HEK293 (cell line): ENCODE measurements at regions of chr3 and their contacts with region 1.

Region 1: DNA sequence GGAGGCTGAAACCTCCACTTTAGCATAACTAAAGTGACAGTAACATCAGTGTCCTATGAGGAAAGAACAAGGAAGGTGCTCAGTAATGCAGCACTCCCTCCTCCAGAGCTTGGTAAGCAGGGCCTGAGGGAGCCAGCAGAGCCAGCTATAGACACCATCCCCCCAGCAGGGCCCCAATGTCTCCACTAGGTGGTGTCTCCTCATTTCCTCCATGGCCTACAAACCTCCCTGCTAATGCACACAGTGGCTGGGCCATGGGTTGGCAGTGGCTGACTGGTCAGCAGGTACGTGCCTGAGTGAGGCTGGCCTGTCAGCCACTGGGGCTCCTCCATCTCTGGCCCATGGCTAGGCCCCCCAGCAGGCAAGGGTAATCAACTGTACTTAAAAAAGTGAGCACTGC is 13.6 kb downstream of the MRPS25 start:
- H3K4me3 ChIP-seq: no peak overlapping the region
- H3K27ac ChIP-seq: no peak overlapping the region
- H3K4me1 ChIP-seq: no peaks in the 10 kb centered on the region
- CTCF ChIP-seq: peak; percentile 54

Region 2: GRCh38 chr3:14913926-14914778 is 137.4 kb before region 1 on chr3:
- CTCF ChIA-PET with region 1: no interaction called
- POLR2A ChIA-PET with region 1: no interaction called
- H3K4me3 ChIP-seq: no peak overlapping the region
- H3K27ac ChIP-seq: no peak overlapping the region
- H3K4me1 ChIP-seq: no peaks in the 10 kb centered on the region
- CTCF ChIP-seq: no peak

Region 3: DNA sequence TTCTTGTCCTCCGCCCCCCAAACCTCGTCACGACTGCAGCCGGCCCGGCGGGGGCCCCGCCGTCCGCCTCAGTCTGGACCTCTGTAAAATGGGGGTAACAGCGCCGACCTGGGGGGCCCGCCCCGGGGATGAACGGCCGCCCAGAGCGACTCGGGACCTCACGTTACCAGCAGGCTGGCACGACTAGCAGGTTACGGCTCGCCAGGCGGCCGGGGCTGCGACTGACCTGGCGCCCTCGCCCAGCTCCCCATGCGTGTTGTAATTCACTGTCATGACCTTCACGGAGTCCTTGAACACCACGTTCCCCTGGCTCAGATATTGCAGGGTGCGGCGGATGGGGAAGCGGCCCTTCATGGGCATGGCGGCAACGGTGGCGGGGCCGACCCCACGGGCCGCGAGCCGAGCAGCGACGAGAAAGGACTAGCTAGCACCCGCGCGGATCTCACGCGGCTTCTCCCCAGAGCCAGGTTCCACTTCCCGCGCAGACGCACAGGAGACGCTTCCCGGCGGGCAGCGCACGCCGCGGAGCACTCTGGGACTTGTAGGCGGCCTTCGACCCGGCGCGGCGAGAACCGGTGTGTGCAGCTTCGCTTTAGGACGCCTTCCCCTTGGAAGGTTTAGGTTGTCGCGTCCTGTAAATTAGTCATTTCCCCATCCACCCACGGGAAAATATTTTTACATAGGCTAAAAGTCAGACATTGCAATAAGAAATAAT is 13.5 kb after region 1 on chr3 and contains the start of gene MRPS25:
- CTCF ChIA-PET with region 1: interaction called, 3 read pairs
- POLR2A ChIA-PET with region 1: interaction called, 13 read pairs
- H3K4me3 ChIP-seq: peak within 1 kb of the TSS; percentile 90
- H3K27ac ChIP-seq: peak within 1 kb of the TSS; percentile 54; the same call in 1 of the 2 replicates
- H3K4me1 ChIP-seq: no peaks in the 10 kb centered on the region
- CTCF ChIP-seq: no peak